ENCODE measurements at regions of chr6 and their contacts with region 1.

Region 1: DNA sequence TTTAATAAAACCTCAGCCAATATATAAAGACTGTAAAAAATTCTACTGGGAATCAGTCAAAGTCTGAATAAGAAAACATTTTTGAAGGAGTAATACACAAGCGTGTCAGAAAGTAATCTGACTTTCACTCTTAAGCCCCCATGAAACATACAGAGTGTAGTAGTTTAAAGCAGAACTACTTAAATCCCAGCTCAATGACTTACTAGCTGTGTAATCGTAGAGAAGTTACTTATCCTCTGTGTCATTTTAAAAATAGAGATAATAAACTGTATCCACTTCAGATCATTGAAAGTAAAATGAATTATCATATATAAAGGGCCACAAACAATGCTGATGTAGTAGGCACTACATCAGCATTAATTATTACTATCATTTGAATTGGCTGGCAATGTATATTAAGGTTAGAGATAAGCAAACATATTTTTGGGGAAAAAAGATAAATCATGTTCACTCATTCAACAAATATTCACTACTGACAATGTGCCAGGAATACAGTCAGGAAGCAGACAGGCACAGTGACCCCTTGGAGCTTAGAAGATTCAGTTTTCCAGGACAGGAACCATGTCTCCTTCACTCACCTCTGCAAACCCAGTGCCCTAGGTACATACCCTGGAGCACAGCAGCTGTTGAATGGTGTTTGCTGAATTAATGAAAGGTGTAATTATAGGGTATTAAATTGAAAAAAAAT is 14.4 kb downstream of the REPS1 start:
- DNase-seq: no peak
- ATAC-seq: no peak
- H3K4me3 ChIP-seq: no peak overlapping the region
- H3K4me3 Mint-ChIP-seq: peak overlapping the region in 6 of 10 donors; percentile 12 to 55 (median 32)
- H3K27ac ChIP-seq: no peak overlapping the region
- H3K27ac Mint-ChIP-seq: peak overlapping the region in 1 of 9 donors; percentile 3
- H3K4me1 ChIP-seq: peaks cover 21 to 34% of the 10 kb centered on the region in 2 donors
- H3K4me1 Mint-ChIP-seq: peaks cover 28 to 94% (median 88%) of the 10 kb centered on the region in 7 donors
- H3K27me3 ChIP-seq: no peaks in the 10 kb centered on the region
- H3K27me3 Mint-ChIP-seq: no peaks in the 10 kb centered on the region

Region 2: GRCh38 chr6:138863321-138863720 is 110.3 kb before region 1 on chr6:
- CTCF ChIA-PET with region 1: no interaction called
- POLR2A ChIA-PET with region 1: no interaction called
- intact Hi-C with region 1: no loop called
- DNase-seq: no peak
- ATAC-seq: no peak
- H3K4me3 ChIP-seq: no peak overlapping the region
- H3K4me3 Mint-ChIP-seq: no peak overlapping the region
- H3K27ac ChIP-seq: no peak overlapping the region
- H3K27ac Mint-ChIP-seq: no peak overlapping the region
- H3K4me1 ChIP-seq: no peaks in the 10 kb centered on the region
- H3K4me1 Mint-ChIP-seq: no peaks in the 10 kb centered on the region
- H3K27me3 ChIP-seq: no peaks in the 10 kb centered on the region
- H3K27me3 Mint-ChIP-seq: peaks cover 0 to 15% (median 11%) of the 10 kb centered on the region in 5 donors

Region 3: DNA sequence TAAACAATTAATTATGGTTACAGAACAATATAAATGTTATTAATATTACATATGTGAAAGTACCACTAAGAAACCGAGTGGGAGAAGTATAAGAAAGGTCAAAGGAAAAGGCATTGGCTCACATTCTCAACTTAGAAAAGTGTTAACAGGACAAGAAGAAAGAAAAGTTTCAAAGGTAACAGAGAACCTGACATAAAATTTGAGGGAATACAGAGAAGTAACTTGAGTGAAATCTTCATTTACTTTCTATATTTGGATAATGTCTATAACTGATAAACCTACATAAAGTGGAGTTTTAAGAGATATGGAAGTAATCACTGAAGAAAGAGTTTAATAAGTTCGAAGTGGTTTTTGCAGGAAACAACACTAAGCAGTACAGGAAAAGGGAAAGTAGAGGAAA is 15.7 kb before region 1 on chr6:
- CTCF ChIA-PET with region 1: interaction called, 3 read pairs
- POLR2A ChIA-PET with region 1: no interaction called
- intact Hi-C with region 1: loop called in 1 of 2 experiments (anchors 2 kb)
- DNase-seq: no peak
- ATAC-seq: no peak
- H3K4me3 ChIP-seq: no peak overlapping the region
- H3K4me3 Mint-ChIP-seq: peak overlapping the region in 9 of 10 donors; percentile 30 to 73 (median 64)
- H3K27ac ChIP-seq: no peak overlapping the region
- H3K27ac Mint-ChIP-seq: peak overlapping the region in 7 of 9 donors; percentile 24 to 75 (median 44)
- H3K4me1 ChIP-seq: peaks cover 11 to 14% of the 10 kb centered on the region in 2 donors
- H3K4me1 Mint-ChIP-seq: peaks cover 47 to 87% (median 67%) of the 10 kb centered on the region in 7 donors
- H3K27me3 ChIP-seq: no peaks in the 10 kb centered on the region
- H3K27me3 Mint-ChIP-seq: no peaks in the 10 kb centered on the region